Activated T-helper 1 cell treated with anti-CD3 and anti-CD28 coated beads, Interleukin-12 subunit alpha, Interleukin-12 subunit beta, Interleukin-2, Interleukin-4 antibody, amounts not matched to agents 30 ng/mL and 10 ng/mL and 1 ng/mL, durations not matched to agents 14 hours and 24 hours and 36 hours (primary cell): ENCODE measurements at regions of chr14 and their contacts with region 1.

Region 1: DNA sequence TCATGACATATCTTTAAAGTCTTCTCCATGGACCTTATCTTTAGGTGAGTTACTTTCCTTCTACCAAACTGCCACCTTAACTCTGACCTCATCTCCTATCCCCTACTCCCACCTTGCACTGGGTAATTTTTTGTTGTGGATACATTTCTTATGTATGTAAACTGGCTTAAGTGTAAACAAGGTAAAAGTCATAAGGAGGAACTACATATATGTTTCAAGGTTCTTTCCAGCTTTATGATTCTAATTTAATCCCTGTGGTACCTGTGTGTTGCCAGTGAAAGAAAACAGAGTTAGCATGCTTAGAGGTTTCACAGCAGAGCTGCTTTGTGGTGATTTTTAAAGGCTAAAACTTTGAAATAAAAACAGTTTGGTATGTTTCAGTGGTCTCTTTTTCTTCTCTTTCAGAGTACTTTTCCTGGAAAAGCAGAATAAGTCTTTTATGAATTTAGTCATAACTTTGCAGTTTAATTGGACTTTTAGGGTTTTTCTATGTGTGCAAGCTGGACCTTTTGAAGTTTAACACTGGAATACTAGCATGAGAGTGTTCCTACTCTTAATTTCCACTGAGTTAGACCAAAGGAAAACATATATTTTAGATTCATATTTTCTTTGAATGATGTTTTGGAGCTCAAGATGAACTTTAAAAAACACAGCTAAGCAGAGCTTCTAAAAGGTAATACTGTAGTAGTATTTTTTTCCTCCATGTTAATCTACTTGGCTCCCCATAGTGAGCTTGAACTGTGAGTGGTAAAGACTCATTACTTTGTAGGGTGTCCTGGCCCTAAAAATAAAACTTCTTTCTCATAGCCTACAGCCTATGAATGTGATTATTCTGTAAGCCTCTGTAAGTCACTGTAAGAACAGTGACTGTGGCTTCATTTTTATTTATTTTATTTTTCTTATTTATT is 105.4 kb downstream of the FUT8 start:
- DNase-seq: no peak
- H3K4me3 Mint-ChIP-seq: no peak overlapping the region
- H3K27ac Mint-ChIP-seq: peak overlapping the region; percentile 76
- H3K4me1 Mint-ChIP-seq: peaks cover 56% of the 10 kb centered on the region
- H3K27me3 Mint-ChIP-seq: no peaks in the 10 kb centered on the region

Region 2: DNA sequence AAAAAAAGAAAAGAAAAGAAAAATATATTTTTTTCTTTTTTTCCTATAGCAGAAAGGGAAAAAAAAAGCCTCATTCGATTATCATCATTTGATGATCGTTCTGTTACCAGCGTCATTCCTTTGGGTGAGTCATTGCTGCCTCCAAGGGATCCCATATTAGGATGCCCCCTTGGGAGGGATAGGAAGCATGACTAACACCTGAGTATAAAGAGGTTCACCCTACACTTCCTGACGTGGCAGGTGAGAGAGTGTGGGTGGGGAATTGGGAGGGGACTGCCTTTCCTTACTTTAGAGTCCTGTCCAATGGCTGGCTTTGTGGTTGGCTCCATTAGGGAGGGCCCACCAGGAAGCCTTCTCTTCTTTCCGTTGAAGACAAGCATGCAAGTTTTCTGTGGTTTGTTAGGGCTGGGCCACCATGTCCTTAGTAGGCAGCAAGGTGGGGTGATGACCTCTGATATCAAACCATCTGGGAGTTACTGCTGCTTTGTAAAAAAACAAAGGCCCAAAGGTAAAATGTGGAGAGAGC is 161.5 kb before region 1 on chr14:
- intact Hi-C with region 1: no loop called
- DNase-seq: no peak
- H3K4me3 Mint-ChIP-seq: peak overlapping the region; percentile 12
- H3K27ac Mint-ChIP-seq: peak overlapping the region; percentile 87
- H3K4me1 Mint-ChIP-seq: peaks cover 87% of the 10 kb centered on the region
- H3K27me3 Mint-ChIP-seq: no peaks in the 10 kb centered on the region

Region 3: GRCh38 chr14:65438266-65438933 is 79.5 kb before region 1 on chr14:
- intact Hi-C with region 1: loop called (anchors 5 kb)
- DNase-seq: no peak
- H3K4me3 Mint-ChIP-seq: peak overlapping the region; percentile 38
- H3K27ac Mint-ChIP-seq: peak overlapping the region; percentile 90
- H3K4me1 Mint-ChIP-seq: peaks cover 46% of the 10 kb centered on the region
- H3K27me3 Mint-ChIP-seq: no peaks in the 10 kb centered on the region

Region 4: GRCh38 chr14:65501328-65501727 is 16.6 kb before region 1 on chr14:
- intact Hi-C with region 1: loop called (anchors 2 kb)
- DNase-seq: no peak
- H3K4me3 Mint-ChIP-seq: no peak overlapping the region
- H3K27ac Mint-ChIP-seq: no peak overlapping the region
- H3K4me1 Mint-ChIP-seq: peaks cover 52% of the 10 kb centered on the region
- H3K27me3 Mint-ChIP-seq: no peaks in the 10 kb centered on the region

Region 5: GRCh38 chr14:65565948-65566347 is 48.1 kb after region 1 on chr14:
- intact Hi-C with region 1: loop called (anchors 5 kb)
- DNase-seq: no peak
- H3K4me3 Mint-ChIP-seq: no peak overlapping the region
- H3K27ac Mint-ChIP-seq: peak overlapping the region; percentile 84
- H3K4me1 Mint-ChIP-seq: peaks cover 57% of the 10 kb centered on the region
- H3K27me3 Mint-ChIP-seq: no peaks in the 10 kb centered on the region